ENCODE measurements at regions of chr5 and their contacts with region 1.

Region 1: DNA sequence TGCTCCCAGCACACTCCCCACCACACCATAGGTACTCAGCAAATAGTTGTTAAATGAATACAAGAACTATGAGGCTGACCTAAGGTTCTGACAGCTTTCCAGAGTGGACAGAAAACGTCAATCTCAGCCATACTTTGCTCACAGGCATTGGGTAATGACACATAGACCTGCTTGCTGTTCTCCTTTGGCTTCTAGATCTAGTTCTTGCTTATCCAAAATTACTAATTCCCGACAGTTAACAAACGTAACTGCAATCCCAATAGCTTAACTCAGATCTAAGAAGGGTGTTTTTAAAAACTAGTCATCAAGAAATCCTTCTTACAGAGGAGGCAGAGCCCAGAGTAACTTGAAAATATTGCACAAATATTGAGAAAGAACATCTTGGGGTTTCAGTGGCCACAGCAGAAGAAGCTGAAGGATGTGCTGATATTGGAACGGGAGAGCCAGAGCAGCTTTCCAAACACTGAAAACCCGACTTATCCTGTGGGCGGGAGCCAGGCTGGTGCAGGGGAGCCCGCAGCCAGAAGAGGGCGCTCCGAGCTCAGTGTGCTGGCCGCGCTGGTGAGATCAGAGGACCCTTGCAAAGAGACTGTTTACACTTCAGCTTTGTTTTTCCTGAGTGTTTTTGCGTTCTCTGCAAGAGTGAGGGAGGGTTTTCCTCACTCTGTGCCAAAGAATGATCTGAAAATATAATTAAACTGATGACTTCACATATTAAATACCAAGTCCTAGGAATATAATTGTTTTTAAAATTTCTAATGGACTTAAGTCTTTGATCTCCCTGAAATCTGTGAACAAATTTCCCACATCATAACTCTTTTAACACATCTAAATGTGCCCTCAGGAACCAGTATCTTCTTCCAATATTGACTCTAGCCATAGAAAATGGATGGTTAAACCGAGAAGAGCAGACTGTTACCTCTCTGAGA is 30.3 kb downstream of the FGF1 start:
- DNase-seq: peak; percentile 78
- H3K4me3 ChIP-seq: no peak overlapping the region
- H3K27ac ChIP-seq: peak overlapping the region in 2 of 4 donors; percentile 2 to 45
- H3K4me1 ChIP-seq: no peaks in the 10 kb centered on the region
- H3K27me3 ChIP-seq: no peaks in the 10 kb centered on the region
- CTCF ChIP-seq: peak; percentile 86 to 96 (median 95)
- EP300 ChIP-seq: no peak
- POLR2A ChIP-seq: no peak

Region 2: DNA sequence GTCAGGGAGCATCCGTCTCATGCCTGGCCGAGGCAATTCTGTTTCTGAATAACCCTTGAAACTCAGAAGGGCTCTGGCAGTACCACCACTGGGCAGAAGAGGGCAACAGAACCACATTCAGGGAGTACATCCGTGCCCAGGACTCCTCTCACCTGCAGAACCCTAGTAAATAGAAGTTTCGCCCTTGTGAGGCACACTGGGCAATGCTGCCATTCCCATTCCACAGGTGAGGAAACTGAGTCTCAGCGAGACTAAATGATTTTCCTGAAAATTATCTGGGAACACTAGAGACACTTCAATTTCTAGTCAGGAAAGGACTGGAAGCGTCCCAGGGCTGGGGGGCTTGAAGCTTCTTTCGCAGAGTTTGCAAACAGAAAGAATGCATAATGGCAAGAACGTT is 44.4 kb before region 1 on chr5:
- in situ Hi-C with region 1: no loop called
- intact Hi-C with region 1: loop called (anchors 5 kb)
- DNase-seq: peak; percentile 73
- H3K4me3 ChIP-seq: no peak overlapping the region
- H3K27ac ChIP-seq: no peak overlapping the region
- H3K4me1 ChIP-seq: no peaks in the 10 kb centered on the region
- H3K27me3 ChIP-seq: peaks cover 16% of the 10 kb centered on the region
- CTCF ChIP-seq: peak; percentile 76 to 87 (median 83)
- EP300 ChIP-seq: no peak
- POLR2A ChIP-seq: no peak